IMR-90 (cell line): ENCODE measurements at regions of chr17 and their contacts with region 1.

Region 1: GRCh38 chr17:44108440-44109324 is 14.8 kb downstream of the HDAC5 start:
- DNase-seq: peak; percentile 98
- ATAC-seq: peak; percentile 90
- H3K4me3 ChIP-seq: no peak overlapping the region
- H3K27ac ChIP-seq: peak overlapping the region; percentile 84
- H3K4me1 ChIP-seq: peaks cover 47% of the 10 kb centered on the region
- H3K27me3 ChIP-seq: no peaks in the 10 kb centered on the region
- CTCF ChIP-seq: no peak
- POLR2A ChIP-seq: peak; percentile 49
- RAD21 ChIP-seq: no peak; the same call in 1 of the 2 replicates

Region 2: DNA sequence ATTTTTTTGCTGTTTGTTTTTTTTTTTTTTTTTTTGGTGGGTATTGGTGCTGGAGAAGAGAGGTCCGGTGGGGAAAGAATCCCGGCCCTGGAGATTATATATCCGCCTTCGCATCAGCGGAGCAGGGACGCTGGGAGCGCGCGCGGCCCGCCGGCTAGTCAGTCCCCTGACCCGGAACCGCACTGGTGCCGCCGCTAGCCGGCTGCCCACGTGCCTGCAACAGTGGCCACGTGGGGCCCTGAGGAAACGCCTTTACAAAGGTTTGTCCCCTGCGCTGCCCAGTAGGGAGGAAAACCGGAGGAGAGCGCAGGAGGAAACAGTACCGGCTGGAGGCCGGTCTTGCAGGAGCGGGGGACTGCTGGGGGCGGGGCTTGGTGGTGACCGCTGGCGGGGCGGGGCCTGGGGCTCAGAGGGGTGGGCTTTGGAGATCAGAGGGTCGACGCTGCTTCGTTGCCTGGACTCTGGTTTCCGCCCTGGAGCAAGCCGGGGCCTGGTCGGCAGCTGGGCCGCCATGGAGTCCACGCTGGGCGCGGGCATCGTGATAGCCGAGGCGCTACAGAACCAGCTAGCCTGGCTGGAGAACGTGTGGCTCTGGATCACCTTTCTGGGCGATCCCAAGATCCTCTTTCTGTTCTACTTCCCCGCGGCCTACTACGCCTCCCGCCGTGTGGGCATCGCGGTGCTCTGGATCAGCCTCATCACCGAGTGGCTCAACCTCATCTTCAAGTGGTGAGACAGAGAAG is 38.1 kb before region 1 on chr17 and contains the start of gene G6PC3:
- CTCF ChIA-PET with region 1: no interaction called
- POLR2A ChIA-PET with region 1: interaction called, 3 read pairs
- dilution Hi-C with region 1: no loop called
- in situ Hi-C with region 1: no loop called
- intact Hi-C with region 1: loop called (anchors 1 kb)
- DNase-seq: peak; percentile 98
- ATAC-seq: peak; percentile 88
- H3K4me3 ChIP-seq: peak within 1 kb of the TSS; percentile 56
- H3K27ac ChIP-seq: peak within 1 kb of the TSS; percentile 91
- H3K4me1 ChIP-seq: peaks cover 9% of the 10 kb centered on the region
- H3K27me3 ChIP-seq: no peaks in the 10 kb centered on the region
- CTCF ChIP-seq: 0 out of 2 replicates have a peak, but pooled peaks have one; percentile 11
- POLR2A ChIP-seq: peak; percentile 94
- RAD21 ChIP-seq: peak; percentile 26
- total RNA-seq, gene G6PC3: 19.4 and 20.4 TPM in 2 replicates